Natural killer cell (primary cell): ENCODE measurements at regions of chr3 and their contacts with region 1.

Region 1: DNA sequence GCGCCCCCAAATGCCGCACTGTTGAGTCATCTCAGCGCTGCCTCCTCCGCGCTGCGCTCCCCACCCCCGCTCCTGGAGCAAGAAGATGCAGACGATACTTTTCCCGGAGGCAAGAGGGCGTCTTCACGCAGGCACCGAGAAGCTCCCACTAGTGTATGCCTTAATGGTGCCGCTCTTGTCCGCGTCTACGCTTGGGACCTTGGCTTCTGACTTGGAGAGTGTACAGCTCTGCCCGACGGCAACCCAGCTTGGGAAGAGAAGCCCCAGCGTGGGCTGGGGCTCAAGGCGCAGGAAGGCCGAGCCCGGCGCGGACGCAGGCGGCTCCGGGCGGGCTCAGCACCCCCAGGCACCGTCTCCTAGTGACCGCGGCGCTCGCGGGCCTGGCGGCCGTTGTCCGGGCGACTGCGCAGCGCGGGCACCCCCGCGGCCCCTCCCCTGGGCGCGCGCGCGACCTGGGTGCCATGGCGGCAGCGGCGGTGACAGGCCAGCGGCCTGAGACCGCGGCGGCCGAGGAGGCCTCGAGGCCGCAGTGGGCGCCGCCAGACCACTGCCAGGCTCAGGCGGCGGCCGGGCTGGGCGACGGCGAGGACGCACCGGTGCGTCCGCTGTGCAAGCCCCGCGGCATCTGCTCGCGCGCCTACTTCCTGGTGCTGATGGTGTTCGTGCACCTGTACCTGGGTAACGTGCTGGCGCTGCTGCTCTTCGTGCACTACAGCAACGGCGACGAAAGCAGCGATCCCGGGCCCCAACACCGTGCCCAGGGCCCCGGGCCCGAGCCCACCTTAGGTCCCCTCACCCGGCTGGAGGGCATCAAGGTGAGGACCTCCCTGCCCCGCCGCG is at the start of gene P4HTM:
- DNase-seq: peak; percentile 64 to 85
- ATAC-seq: peak; percentile 65 to 77 (median 73)
- H3K4me3 ChIP-seq: peak within 1 kb of the TSS; percentile 75
- H3K4me3 Mint-ChIP-seq: peak within 1 kb of the TSS; percentile 90
- H3K27ac ChIP-seq: peak within 1 kb of the TSS; percentile 62
- H3K27ac Mint-ChIP-seq: peak within 1 kb of the TSS; percentile 73 to 89
- H3K4me1 ChIP-seq: peaks cover 26% of the 10 kb centered on the region
- H3K4me1 Mint-ChIP-seq: peaks cover 28 to 49% of the 10 kb centered on the region in 2 donors
- H3K27me3 ChIP-seq: no peaks in the 10 kb centered on the region
- H3K27me3 Mint-ChIP-seq: no peaks in the 10 kb centered on the region
- CTCF ChIP-seq: no peak
- total RNA-seq, gene P4HTM: 28.8 to 31.3 (median 30.6) TPM

Region 2: GRCh38 chr3:48635222-48636021 is 354.6 kb before region 1 on chr3 and contains the start of gene SLC26A6:
- intact Hi-C with region 1: no loop called
- DNase-seq: peak; percentile 86 to 94
- ATAC-seq: peak; percentile 95 to 96 (median 96)
- H3K4me3 ChIP-seq: peak within 1 kb of the TSS; percentile 83
- H3K4me3 Mint-ChIP-seq: peak within 1 kb of the TSS; percentile 93
- H3K27ac ChIP-seq: peak within 1 kb of the TSS; percentile 49
- H3K27ac Mint-ChIP-seq: peak within 1 kb of the TSS; percentile 62 to 81
- H3K4me1 ChIP-seq: peaks cover 23% of the 10 kb centered on the region
- H3K4me1 Mint-ChIP-seq: peaks cover 0 to 31% of the 10 kb centered on the region in 2 donors
- H3K27me3 ChIP-seq: no peaks in the 10 kb centered on the region
- H3K27me3 Mint-ChIP-seq: no peaks in the 10 kb centered on the region
- CTCF ChIP-seq: peak; percentile 42
- total RNA-seq, gene SLC26A6: 25.8 to 37.6 (median 32.3) TPM

Region 3: GRCh38 chr3:49007068-49007770 is 17.2 kb after region 1 on chr3 and contains the start of gene WDR6:
- intact Hi-C with region 1: loop called (anchors 2 kb)
- DNase-seq: peak; percentile 94 to 99
- ATAC-seq: peak; percentile 91 to 98 (median 94)
- H3K4me3 ChIP-seq: peak within 1 kb of the TSS; percentile 96
- H3K4me3 Mint-ChIP-seq: peak within 1 kb of the TSS; percentile 100
- H3K27ac ChIP-seq: peak within 1 kb of the TSS; percentile 95
- H3K27ac Mint-ChIP-seq: peak within 1 kb of the TSS; percentile 98 to 99
- H3K4me1 ChIP-seq: peaks cover 20% of the 10 kb centered on the region
- H3K4me1 Mint-ChIP-seq: peaks cover 21 to 24% of the 10 kb centered on the region in 2 donors
- H3K27me3 ChIP-seq: no peaks in the 10 kb centered on the region
- H3K27me3 Mint-ChIP-seq: no peaks in the 10 kb centered on the region
- CTCF ChIP-seq: peak; percentile 44
- total RNA-seq, gene WDR6: 113 to 167 (median 129) TPM

Region 4: DNA sequence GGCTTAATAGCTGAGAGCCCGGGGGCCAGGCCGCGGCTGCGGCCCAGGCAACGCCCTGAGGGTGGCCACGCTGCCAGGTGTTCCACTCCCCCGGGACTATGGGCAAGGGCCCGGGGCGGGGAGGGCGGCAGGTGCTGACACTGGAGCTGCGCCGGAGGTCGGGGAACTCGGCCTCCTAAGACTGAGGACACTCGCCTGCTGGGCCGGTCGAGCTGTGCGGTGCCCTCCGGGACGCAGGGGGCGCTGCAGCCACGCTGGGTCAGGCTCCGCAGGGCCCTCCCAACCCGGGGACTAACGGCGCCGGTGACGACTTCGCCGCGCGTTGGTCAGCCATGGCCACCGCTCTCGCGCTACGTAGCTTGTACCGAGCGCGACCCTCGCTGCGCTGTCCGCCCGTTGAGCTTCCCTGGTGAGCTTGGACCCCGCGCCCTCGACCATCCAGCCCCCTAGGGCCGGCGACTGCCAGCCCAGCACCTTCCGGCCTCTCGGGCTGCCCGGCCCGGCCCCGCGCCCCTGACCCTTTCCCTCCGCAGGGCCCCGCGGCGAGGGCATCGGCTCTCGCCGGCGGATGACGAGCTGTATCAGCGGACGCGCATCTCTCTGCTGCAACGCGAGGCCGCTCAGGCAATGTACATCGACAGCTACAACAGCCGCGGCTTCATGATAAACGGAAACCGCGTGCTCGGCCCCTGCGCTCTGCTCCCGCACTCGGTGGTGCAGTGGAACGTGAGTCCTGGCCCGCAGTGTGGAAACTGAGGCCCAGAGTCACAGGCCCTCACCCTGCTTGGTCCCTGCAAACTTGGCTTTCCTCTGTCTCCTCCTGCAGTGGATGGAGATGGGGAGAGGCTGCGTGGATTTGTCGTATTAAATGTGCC is 32.0 kb after region 1 on chr3 and contains the start of gene NDUFAF3:
- intact Hi-C with region 1: loop called (anchors 5 kb)
- DNase-seq: peak; percentile 95
- ATAC-seq: peak; percentile 74 to 92 (median 79)
- H3K4me3 ChIP-seq: peak within 1 kb of the TSS; percentile 82
- H3K4me3 Mint-ChIP-seq: peak within 1 kb of the TSS; percentile 98
- H3K27ac ChIP-seq: peak within 1 kb of the TSS; percentile 94
- H3K27ac Mint-ChIP-seq: peak within 1 kb of the TSS; percentile 95 to 99
- H3K4me1 ChIP-seq: peaks cover 43% of the 10 kb centered on the region
- H3K4me1 Mint-ChIP-seq: peaks cover 16 to 35% of the 10 kb centered on the region in 2 donors
- H3K27me3 ChIP-seq: no peaks in the 10 kb centered on the region
- H3K27me3 Mint-ChIP-seq: no peaks in the 10 kb centered on the region
- CTCF ChIP-seq: peak; percentile 99
- total RNA-seq, gene NDUFAF3: 51.0 to 72.9 (median 66.1) TPM

Region 5: DNA sequence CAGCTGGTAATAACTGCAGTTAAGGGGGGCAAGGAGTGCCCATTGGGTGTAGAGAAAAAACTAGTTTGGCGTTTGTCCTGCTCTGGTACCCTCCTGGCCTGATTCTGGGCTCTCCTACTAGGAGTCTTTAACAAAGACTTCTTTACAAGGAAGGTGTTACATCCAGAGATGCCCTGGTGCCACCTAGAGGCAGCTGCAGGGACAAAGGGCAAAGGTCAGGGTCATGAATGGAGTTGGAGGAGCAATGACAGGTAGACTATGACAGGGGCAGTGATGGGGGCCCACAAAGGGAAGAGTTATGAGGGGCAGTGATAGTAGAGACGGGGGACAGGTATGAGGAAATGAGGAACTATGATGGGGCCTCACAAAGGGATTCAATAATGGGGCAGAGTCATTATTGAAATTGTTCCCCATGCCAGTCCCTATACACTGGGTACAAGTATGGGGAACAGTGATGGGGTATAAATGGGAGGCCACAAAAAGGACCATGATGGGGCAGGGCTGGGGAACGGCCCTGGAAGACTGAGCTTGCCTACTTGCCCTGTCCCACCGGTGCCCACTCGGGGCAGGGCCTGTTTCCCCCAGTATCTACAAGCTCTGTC is 168.2 kb after region 1 on chr3:
- intact Hi-C with region 1: loop called (anchors 1 kb)
- DNase-seq: peak; percentile 27 to 81
- ATAC-seq: peak; percentile 75 to 96 (median 84)
- H3K4me3 ChIP-seq: no peak overlapping the region
- H3K4me3 Mint-ChIP-seq: no peak overlapping the region
- H3K27ac ChIP-seq: no peak overlapping the region
- H3K27ac Mint-ChIP-seq: peak overlapping the region in 1 of 2 donors; percentile 6
- H3K4me1 ChIP-seq: no peaks in the 10 kb centered on the region
- H3K4me1 Mint-ChIP-seq: peaks cover 0 to 3% of the 10 kb centered on the region in 2 donors
- H3K27me3 ChIP-seq: no peaks in the 10 kb centered on the region
- H3K27me3 Mint-ChIP-seq: no peaks in the 10 kb centered on the region
- CTCF ChIP-seq: peak; percentile 43

Region 6: GRCh38 chr3:49199239-49199899 is 209.4 kb after region 1 on chr3:
- intact Hi-C with region 1: no loop called
- DNase-seq: no peak
- ATAC-seq: peak in 1 of 3 donors; percentile 33
- H3K4me3 ChIP-seq: no peak overlapping the region
- H3K4me3 Mint-ChIP-seq: no peak overlapping the region
- H3K27ac ChIP-seq: no peak overlapping the region
- H3K27ac Mint-ChIP-seq: no peak overlapping the region
- H3K4me1 ChIP-seq: no peaks in the 10 kb centered on the region
- H3K4me1 Mint-ChIP-seq: no peaks in the 10 kb centered on the region
- H3K27me3 ChIP-seq: peaks cover 2% of the 10 kb centered on the region
- H3K27me3 Mint-ChIP-seq: peaks cover 21 to 26% of the 10 kb centered on the region in 2 donors
- CTCF ChIP-seq: no peak

Region 7: DNA sequence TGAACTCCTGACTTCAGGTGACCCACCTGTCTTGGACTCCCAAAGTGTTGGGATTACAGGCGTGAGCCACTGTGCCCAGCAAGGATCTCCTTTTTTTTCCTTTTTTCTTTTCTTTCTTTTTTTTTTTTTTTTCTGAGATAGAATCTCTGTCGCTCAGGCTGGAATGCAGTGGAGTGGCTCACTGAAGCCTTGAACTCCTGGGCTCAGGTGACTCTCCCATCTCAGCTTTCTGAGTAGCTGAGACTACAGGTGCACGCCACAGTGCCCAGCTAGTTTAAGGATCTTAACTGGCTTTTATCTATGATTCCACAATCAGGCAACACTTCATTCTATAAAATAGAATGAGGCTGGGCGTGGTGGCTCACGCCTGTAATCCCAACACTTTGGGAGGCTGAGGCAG is 455.4 kb after region 1 on chr3:
- intact Hi-C with region 1: loop called (anchors 5 kb)
- DNase-seq: no peak
- ATAC-seq: no peak
- H3K4me3 ChIP-seq: no peak overlapping the region
- H3K4me3 Mint-ChIP-seq: no peak overlapping the region
- H3K27ac ChIP-seq: no peak overlapping the region
- H3K27ac Mint-ChIP-seq: peak overlapping the region; percentile 76 to 86
- H3K4me1 ChIP-seq: peaks cover 17% of the 10 kb centered on the region
- H3K4me1 Mint-ChIP-seq: peaks cover 5 to 11% of the 10 kb centered on the region in 2 donors
- H3K27me3 ChIP-seq: no peaks in the 10 kb centered on the region
- H3K27me3 Mint-ChIP-seq: no peaks in the 10 kb centered on the region
- CTCF ChIP-seq: no peak